Tibial artery (tissue), 4 donors: ENCODE measurements at regions of chr2 and their contacts with region 1.

Region 1: DNA sequence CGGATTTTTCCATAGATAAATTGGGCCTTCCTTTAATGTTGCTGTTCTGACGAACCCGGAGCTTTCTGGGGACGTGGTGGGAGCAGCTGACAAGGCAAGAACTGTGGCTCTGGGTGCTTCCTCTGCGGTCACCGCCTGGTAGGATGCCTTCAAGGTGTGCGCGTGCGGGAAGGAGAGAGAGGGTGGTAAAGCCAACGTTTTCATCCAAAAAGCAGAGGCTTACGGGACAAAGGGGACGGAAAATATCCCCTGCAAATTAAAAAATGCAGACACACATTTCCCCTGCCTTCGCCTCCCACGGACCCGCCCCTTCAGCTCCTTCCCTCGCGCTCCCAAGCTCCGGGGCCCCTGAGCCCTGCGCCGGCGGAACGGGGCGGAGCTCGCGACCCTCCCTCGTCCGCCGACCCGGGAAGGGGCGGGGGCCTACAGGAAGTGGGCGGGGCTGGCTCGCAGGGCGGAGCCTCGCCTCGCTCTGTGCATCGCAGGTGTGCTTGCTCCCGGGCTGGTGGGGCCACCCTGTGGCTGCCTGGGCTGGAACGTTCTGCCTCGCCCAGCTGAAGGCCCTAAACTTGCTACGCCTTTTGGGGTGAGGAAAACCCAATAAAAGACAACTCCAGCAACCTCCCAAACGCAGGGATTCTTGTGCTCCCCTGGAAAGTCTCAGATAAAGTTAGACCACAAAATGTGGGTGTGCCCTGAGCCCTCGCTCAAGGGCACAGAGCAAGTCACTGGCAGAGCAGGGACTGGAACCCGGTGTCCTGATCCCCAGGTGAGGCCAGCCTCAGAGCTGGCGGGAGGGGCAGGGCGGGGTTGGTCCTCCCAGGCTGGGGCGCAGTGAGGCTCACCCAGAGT is 25.4 kb upstream of the SLC66A3 start:
- DNase-seq: no peak
- H3K4me3 ChIP-seq: peak overlapping the region; percentile 22 to 44
- H3K27ac ChIP-seq: no peak overlapping the region
- H3K4me1 ChIP-seq: peaks cover 0 to 23% (median 19%) of the 10 kb centered on the region in 4 donors
- H3K27me3 ChIP-seq: peaks cover 0 to 11% of the 10 kb centered on the region in 2 donors
- CTCF ChIP-seq: no peak

Region 2: DNA sequence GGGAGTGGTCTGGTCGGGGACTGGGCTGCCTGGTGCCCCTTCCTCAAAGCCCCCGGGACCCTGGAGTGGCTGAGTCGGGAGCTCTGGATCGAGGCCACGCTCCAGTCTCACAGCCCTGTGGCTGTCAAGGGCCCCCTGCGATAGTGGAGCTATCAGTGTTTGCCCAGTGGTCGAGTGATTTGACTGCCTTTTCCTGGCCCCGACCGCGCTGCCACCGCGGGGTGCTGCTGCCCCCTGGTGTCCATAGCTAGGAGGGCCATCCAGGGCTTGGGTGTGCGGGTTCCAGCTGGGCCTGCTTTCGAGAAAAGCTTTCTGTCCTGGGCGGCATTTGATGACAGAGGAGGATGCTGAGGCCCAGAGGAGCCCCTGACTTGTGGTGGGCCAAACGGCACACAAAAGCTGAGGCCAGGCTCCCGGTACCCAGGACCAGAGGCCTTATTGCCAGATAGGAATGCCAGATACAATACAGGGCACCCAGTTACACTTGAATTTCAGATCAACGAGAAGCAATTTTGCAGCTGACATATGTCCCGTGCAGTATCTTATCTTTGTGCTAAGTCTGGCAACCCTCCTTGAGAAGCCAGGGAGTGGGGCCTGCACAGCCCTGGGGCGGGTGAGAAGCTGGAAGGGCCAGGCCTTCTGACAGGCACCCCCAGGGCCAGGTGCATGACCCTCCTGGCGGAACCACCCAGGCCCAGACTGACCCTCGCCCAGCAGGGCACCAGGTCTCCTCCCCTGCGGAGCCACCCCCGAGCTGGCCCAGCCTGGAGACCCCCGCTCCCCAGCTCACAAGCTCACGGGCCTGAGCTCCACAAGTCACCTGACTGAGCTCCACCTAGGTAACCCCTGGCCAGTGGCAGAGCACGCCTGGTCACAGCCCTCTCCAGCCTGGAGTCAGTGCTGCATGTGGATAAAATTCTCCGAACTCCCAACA is 694.7 kb before region 1 on chr2:
- intact Hi-C with region 1: no loop called
- DNase-seq: peak in 1 of 2 donors; percentile 49
- H3K4me3 ChIP-seq: no peak overlapping the region
- H3K27ac ChIP-seq: no peak overlapping the region
- H3K4me1 ChIP-seq: peaks cover 0 to 20% (median 10%) of the 10 kb centered on the region in 4 donors
- H3K27me3 ChIP-seq: no peaks in the 10 kb centered on the region
- CTCF ChIP-seq: peak; percentile 98

Region 3: GRCh38 chr2:11187083-11187619 is 57.3 kb after region 1 on chr2:
- intact Hi-C with region 1: loop called (anchors 10 kb)
- DNase-seq: no peak
- H3K4me3 ChIP-seq: no peak overlapping the region
- H3K27ac ChIP-seq: no peak overlapping the region
- H3K4me1 ChIP-seq: no peaks in the 10 kb centered on the region
- H3K27me3 ChIP-seq: no peaks in the 10 kb centered on the region
- CTCF ChIP-seq: no peak

Region 4: GRCh38 chr2:11411768-11412448 is 282.1 kb after region 1 on chr2:
- intact Hi-C with region 1: loop called (anchors 5 kb)
- DNase-seq: peak in 1 of 2 donors; percentile 41
- H3K4me3 ChIP-seq: peak overlapping the region; percentile 34 to 47
- H3K27ac ChIP-seq: no peak overlapping the region
- H3K4me1 ChIP-seq: peaks cover 0 to 47% (median 13%) of the 10 kb centered on the region in 4 donors
- H3K27me3 ChIP-seq: no peaks in the 10 kb centered on the region
- CTCF ChIP-seq: peak; percentile 82 to 87

Region 5: GRCh38 chr2:11446733-11447248 is 317.0 kb after region 1 on chr2:
- intact Hi-C with region 1: loop called (anchors 10 kb)
- DNase-seq: peak in 1 of 2 donors; percentile 35
- H3K4me3 ChIP-seq: no peak overlapping the region
- H3K27ac ChIP-seq: no peak overlapping the region
- H3K4me1 ChIP-seq: no peaks in the 10 kb centered on the region
- H3K27me3 ChIP-seq: no peaks in the 10 kb centered on the region
- CTCF ChIP-seq: peak; percentile 74